ENCODE measurements at regions of chr7 and their contacts with region 1.

Region 1: GRCh38 chr7:153422291-153423209 is 629.6 kb upstream of the DPP6 start:
- DNase-seq: no peak

Region 2: GRCh38 chr7:153457746-153458145 is 35.2 kb after region 1 on chr7:
- intact Hi-C with region 1: loop called in 1 of 2 experiments (anchors 1 kb)
- DNase-seq: no peak

Region 3: DNA sequence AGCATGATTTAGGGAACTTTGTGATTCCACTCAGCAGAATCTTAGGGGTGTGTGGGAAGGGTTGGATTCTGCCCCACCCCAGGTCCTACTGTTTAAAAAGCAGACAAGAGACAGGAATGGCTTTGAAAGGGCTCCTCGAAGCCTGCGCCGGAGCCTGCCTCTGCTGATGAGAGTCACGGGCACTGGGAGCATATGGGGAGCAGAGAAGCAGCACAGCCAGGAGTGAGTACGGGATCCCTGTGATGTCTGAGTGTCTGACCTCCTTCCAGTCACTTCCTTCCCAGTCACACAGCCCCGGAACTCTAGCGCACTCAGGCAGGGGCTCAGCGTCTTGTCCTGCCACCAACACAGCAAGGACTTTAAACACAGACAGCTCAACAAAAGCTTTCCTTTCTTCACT is 114.7 kb after region 1 on chr7:
- intact Hi-C with region 1: no loop called
- DNase-seq: no peak